ENCODE measurements at regions of chr5 and their contacts with region 1.

Region 1: GRCh38 chr5:91419571-91420537 is 36.7 kb upstream of the ARRDC3 start:
- DNase-seq: peak; percentile 77
- H3K4me3 ChIP-seq: no peak overlapping the region
- H3K27ac ChIP-seq: no peak overlapping the region
- H3K4me1 ChIP-seq: no peaks in the 10 kb centered on the region
- H3K27me3 ChIP-seq: no peaks in the 10 kb centered on the region
- CTCF ChIP-seq: peak in 1 of 2 donors; percentile 40
- POLR2A ChIP-seq: no peak

Region 2: GRCh38 chr5:90783460-90784333 is 636.2 kb before region 1 on chr5:
- CTCF ChIA-PET with region 1: interaction called, 23 read pairs
- POLR2A ChIA-PET with region 1: no interaction called
- dilution Hi-C with region 1: no loop called
- intact Hi-C with region 1: no loop called
- DNase-seq: peak; percentile 68
- H3K4me3 ChIP-seq: no peak overlapping the region
- H3K27ac ChIP-seq: no peak overlapping the region
- H3K4me1 ChIP-seq: no peaks in the 10 kb centered on the region
- H3K27me3 ChIP-seq: peaks cover 0 to 2% of the 10 kb centered on the region in 2 experiments
- CTCF ChIP-seq: peak; percentile 67 to 79
- POLR2A ChIP-seq: no peak

Region 3: DNA sequence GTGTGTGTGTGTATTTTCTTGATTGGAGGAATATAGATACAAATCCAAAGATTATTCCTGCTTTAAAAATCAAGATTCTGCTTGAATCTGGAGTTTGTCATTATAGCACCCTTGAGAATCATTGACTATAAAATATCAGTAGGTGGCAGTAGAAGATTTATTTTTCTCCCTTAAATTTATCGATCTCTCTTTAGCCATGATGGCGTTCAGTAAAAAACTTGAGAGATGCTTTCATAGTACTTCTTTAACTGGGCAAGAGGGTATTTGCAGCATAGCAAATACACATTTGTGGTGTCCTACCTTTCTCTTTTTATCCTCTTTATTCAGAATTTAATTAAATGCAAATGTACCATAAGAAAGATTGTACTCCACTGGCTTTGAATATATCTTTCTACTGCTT is 553.5 kb before region 1 on chr5:
- CTCF ChIA-PET with region 1: interaction called, 287 read pairs
- POLR2A ChIA-PET with region 1: no interaction called
- dilution Hi-C with region 1: no loop called
- intact Hi-C with region 1: loop called (anchors 1 kb)
- DNase-seq: peak; percentile 71
- H3K4me3 ChIP-seq: no peak overlapping the region
- H3K27ac ChIP-seq: no peak overlapping the region
- H3K4me1 ChIP-seq: no peaks in the 10 kb centered on the region
- H3K27me3 ChIP-seq: no peaks in the 10 kb centered on the region
- CTCF ChIP-seq: peak; percentile 4 to 5
- POLR2A ChIP-seq: no peak

Region 4: DNA sequence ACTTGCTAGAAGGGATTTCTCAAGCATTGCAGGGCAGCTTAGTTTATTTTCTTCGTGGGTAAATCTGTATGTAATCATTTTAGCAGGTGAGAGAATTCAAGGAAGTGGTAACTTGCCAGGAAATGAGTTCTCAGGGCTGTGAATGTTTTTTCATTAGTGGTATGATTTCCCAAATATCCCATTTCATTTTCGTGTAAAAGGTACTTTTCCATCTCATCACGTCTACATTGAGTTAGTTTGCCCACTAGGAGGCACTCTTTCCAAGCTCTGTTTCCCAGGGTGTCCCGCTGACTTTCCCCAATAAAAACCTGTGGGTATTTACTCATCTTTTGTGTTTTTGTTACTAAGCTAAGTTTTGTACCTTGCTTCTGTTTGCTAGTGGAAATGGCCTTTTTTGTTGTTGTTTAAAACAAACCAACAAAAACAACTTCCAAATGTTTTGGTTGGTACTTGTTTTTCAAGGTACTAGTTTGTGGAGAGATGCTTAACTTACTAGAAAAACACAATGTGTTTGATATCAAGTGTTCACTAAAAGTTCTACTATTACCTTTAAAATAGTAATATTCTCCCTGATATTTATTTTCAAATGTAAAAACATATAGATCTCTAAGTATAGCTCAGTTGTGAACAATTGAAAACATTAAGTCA is 487.7 kb before region 1 on chr5:
- CTCF ChIA-PET with region 1: interaction called, 87 read pairs
- POLR2A ChIA-PET with region 1: no interaction called
- dilution Hi-C with region 1: no loop called
- intact Hi-C with region 1: loop called (anchors 1 kb)
- DNase-seq: peak; percentile 93
- H3K4me3 ChIP-seq: no peak overlapping the region
- H3K27ac ChIP-seq: no peak overlapping the region
- H3K4me1 ChIP-seq: peaks cover 5% of the 10 kb centered on the region
- H3K27me3 ChIP-seq: no peaks in the 10 kb centered on the region
- CTCF ChIP-seq: peak; percentile 64 to 71
- POLR2A ChIP-seq: no peak

Region 5: GRCh38 chr5:91407204-91407603 is 12.7 kb before region 1 on chr5:
- CTCF ChIA-PET with region 1: interaction called, 20 read pairs
- POLR2A ChIA-PET with region 1: no interaction called
- dilution Hi-C with region 1: no loop called
- intact Hi-C with region 1: no loop called
- DNase-seq: no peak
- H3K4me3 ChIP-seq: no peak overlapping the region
- H3K27ac ChIP-seq: no peak overlapping the region
- H3K4me1 ChIP-seq: no peaks in the 10 kb centered on the region
- H3K27me3 ChIP-seq: no peaks in the 10 kb centered on the region
- CTCF ChIP-seq: no peak
- POLR2A ChIP-seq: no peak